ENCODE measurements at regions of chr2 and their contacts with region 1.

Region 1: DNA sequence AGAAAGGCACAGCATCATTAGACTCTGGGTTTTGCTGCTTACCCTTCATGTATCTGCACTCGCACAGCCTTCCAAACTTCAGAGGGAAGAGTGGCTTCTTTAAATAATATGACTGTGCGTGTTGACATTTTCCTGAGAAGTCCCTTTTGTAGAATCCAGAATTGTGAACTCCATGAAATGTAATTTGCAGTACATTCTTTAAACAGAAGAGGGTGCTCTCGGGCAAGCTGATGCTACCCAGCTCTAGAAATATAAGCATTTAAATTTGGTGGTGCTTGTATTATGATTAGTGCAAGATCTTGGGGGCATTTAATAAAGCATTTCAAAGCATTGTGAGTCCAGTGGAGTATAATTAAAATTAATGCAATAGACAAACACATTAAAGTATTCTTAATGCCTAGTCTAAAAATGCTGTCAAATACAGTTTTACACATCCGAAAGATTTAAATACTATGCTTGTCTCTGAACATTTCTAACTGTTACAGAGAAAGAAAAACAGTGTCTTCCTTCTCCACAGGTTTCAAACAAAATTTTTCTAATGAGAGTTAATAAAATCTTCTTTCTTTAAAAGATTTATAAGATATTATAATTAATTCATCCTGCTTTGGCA is 17.3 kb upstream of the GTF2A1L start:
- DNase-seq: peak; percentile 30
- H3K4me3 ChIP-seq: no peak overlapping the region
- H3K27ac ChIP-seq: no peak overlapping the region
- H3K27me3 ChIP-seq: no peaks in the 10 kb centered on the region
- CTCF ChIP-seq: peak; percentile 87

Region 2: GRCh38 chr2:48589170-48589767 is 11.0 kb before region 1 on chr2:
- CTCF ChIA-PET with region 1: interaction called, 16 read pairs
- POLR2A ChIA-PET with region 1: no interaction called
- DNase-seq: no peak
- H3K4me3 ChIP-seq: no peak overlapping the region
- H3K27ac ChIP-seq: no peak overlapping the region
- H3K27me3 ChIP-seq: no peaks in the 10 kb centered on the region
- CTCF ChIP-seq: peak; percentile 82

Measured in AG04450 (cell line).